AG04449 (cell line): ENCODE measurements at regions of chr1 and their contacts with region 1.

Region 1: GRCh38 chr1:29708901-29709710 is 472.8 kb downstream of the PTPRU start:
- DNase-seq: no peak
- H3K4me3 ChIP-seq: no peak overlapping the region
- CTCF ChIP-seq: no peak

Region 2: DNA sequence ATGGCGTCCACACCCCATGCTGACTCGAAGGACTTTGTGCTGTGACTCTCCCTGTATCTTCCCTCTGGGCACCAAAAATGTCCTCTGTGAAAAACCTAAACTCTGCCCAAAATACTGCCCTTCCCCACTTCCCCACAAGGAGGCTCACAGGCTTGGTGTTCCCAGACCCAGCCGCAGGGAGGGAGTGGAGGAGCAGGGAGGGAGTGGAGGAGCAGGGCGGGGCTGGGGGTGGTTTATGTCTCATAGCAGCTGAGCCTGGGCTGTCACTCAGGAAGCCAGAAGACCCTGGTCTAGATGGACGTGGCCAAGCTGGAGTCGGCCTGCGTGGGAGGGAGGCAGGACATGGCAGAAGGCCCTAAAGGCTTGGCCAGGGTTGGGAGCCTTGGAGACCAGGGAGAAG is 11.1 kb before region 1 on chr1:
- CTCF ChIA-PET with region 1: interaction called, 166 read pairs
- POLR2A ChIA-PET with region 1: no interaction called
- DNase-seq: no peak
- H3K4me3 ChIP-seq: no peak overlapping the region
- CTCF ChIP-seq: peak; percentile 88

Region 3: GRCh38 chr1:29749024-29749945 is 40.2 kb after region 1 on chr1:
- CTCF ChIA-PET with region 1: no interaction called
- POLR2A ChIA-PET with region 1: no interaction called
- DNase-seq: no peak
- H3K4me3 ChIP-seq: no peak overlapping the region
- CTCF ChIP-seq: no peak